ENCODE measurements at regions of chr15 and their contacts with region 1.

Region 1: DNA sequence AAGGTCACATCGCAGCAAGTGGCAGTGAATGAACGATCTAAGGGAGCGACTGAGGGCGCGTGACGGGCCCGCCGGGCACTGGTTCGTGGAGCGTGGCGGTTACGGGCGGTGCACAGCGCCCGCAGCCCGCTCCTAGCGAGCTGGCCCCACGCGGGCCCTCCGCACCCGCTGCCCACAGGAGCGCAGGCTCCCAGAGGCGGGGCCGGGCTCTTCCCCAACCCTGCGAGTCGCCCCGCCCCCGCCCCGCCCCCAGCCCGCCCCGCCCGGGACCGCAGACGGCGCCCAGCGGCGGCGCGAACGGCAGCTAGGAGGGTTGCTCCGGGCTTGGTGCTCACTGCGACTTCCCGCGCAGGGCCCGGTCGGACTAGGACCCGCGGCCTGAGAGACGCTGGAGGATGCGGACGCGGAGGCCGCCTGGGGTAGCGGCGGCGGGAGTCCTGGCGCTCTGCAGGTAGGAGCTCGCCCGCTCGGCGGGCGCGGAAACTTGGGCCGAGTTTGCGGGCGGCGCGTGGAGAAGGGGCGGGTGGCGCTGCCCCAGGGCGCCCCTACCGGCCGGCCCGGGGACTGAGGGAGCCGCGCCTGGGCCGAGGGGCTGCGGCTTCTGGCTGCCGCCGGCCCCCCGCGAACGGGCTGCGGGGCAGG is at the start of gene C15orf39:
- DNase-seq: no peak
- H3K4me3 ChIP-seq: peak within 1 kb of the TSS; percentile 89
- H3K27ac ChIP-seq: peak within 1 kb of the TSS; percentile 85
- H3K27me3 ChIP-seq: peaks cover 19% of the 10 kb centered on the region
- CTCF ChIP-seq: peak; percentile 57
- polyA plus RNA-seq, gene C15orf39: 2.1 and 3.3 TPM in 2 replicates

Region 2: DNA sequence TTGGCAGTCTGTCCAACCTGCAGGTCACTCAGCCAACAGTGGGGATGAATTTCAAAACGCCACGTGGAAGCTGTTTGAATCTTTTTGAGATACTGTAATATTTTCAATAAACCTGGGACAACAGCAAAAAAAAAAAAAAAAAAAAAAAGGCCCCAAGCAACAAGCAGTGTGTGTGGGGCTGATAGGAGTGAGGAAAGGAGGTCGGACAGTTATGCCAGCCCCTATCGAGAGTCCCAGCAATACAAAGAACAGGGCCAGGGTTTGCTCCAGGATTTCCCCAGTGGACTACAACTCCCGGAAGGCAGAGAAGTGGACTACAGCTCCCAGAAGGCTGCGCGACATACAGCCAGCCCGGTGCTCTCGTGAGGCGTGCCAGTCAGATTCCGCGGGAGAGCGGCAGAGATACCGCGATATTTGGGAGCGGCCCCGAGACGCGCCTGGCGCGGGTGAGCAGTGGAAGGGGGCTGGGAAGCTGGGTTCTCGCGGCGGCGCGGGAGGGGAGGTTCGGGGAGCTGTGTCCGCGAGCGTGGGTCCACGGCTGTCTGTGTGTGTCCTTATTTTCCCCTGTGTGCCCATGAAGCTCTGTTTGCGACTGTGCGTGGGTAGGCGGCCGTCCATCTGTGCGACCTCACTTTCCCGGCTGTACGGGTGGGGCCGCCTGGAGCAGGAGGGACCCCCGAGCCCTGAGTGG is 178.4 kb before region 1 on chr15 and contains the start of gene PPCDC:
- CTCF ChIA-PET with region 1: interaction called, 63 read pairs
- POLR2A ChIA-PET with region 1: interaction called, 12 read pairs
- DNase-seq: peak; percentile 86
- H3K4me3 ChIP-seq: peak within 1 kb of the TSS; percentile 93
- H3K27ac ChIP-seq: peak within 1 kb of the TSS; percentile 31
- H3K27me3 ChIP-seq: peaks cover 2% of the 10 kb centered on the region
- CTCF ChIP-seq: no peak
- polyA plus RNA-seq, gene PPCDC: 5.5 and 7.1 TPM in 2 replicates

Region 3: GRCh38 chr15:75029378-75030022 is 172.2 kb before region 1 on chr15:
- CTCF ChIA-PET with region 1: interaction called, 63 read pairs
- POLR2A ChIA-PET with region 1: interaction called, 6 read pairs
- DNase-seq: peak; percentile 63
- H3K4me3 ChIP-seq: peak overlapping the region; percentile 41
- H3K27ac ChIP-seq: peak overlapping the region; percentile 52
- H3K27me3 ChIP-seq: no peaks in the 10 kb centered on the region
- CTCF ChIP-seq: peak; percentile 89

Region 4: DNA sequence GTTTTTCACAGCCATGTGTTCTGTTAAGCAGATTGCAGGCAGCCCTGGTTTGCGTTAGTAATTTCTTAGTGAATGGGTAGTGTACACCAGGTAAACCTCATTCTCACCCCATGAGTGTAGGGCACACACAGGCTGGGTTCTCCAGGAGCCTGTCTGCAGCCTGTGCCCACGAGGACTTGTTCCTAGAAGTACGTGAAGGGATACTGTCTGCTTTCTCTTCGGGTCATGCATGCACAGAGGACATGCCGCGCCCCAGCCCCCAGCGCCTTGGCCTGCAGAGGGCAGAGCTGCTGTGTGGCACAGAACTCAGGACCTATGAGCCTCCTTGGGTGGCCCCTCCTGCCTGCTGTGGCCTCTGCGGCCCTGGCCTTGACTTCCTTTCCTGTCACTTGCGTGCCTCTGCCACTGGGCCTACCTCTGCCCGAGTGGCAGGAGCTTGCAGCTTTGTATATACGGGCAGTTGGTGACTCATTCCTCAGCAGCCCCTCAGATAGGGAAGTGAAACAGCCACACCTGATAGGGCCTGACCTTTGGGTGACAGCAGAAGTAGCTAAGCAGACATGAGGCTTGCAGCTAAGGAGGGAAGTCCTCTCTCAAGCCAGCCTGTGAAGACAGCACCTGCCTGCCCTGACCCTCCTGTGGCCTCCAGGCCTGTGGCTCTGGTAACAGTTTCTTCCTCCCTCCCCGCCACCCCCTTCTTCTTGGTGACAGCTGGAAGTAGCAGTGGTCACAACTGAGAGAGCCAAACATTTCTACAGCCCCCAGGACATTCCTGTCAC is 158.8 kb before region 1 on chr15:
- CTCF ChIA-PET with region 1: interaction called, 35 read pairs
- POLR2A ChIA-PET with region 1: interaction called, 28 read pairs
- DNase-seq: no peak
- H3K4me3 ChIP-seq: no peak overlapping the region
- H3K27ac ChIP-seq: peak overlapping the region; percentile 94
- H3K27me3 ChIP-seq: no peaks in the 10 kb centered on the region
- CTCF ChIP-seq: peak; percentile 35

Region 5: DNA sequence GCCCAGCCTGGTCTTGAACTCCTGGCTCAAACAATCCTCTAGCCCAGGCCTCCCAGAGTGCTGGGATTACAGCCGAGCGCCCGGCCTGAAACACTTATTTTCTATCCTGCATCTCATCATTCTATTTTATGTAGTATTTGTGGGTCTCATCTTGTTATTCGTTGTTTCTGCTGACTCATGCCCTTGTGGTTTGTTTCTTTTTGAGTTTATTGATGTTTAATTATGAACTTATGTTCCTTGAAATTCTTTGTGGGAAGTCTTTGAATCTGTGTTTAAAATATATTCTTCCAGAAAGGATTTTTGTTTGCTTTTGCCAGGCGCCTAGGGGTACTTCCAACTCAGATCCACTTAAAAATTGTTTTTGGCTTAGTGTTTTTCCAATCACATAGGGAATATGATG is 78.3 kb before region 1 on chr15:
- CTCF ChIA-PET with region 1: interaction called, 13 read pairs
- POLR2A ChIA-PET with region 1: interaction called, 3 read pairs
- DNase-seq: peak; percentile 37
- H3K4me3 ChIP-seq: no peak overlapping the region
- H3K27ac ChIP-seq: peak overlapping the region; percentile 52
- H3K27me3 ChIP-seq: peaks cover 4% of the 10 kb centered on the region
- CTCF ChIP-seq: no peak

Region 6: GRCh38 chr15:75176404-75176761 is 25.3 kb before region 1 on chr15:
- CTCF ChIA-PET with region 1: interaction called, 5 read pairs
- POLR2A ChIA-PET with region 1: interaction called, 10 read pairs
- DNase-seq: no peak
- H3K4me3 ChIP-seq: no peak overlapping the region
- H3K27ac ChIP-seq: no peak overlapping the region
- H3K27me3 ChIP-seq: no peaks in the 10 kb centered on the region
- CTCF ChIP-seq: no peak

Region 7: DNA sequence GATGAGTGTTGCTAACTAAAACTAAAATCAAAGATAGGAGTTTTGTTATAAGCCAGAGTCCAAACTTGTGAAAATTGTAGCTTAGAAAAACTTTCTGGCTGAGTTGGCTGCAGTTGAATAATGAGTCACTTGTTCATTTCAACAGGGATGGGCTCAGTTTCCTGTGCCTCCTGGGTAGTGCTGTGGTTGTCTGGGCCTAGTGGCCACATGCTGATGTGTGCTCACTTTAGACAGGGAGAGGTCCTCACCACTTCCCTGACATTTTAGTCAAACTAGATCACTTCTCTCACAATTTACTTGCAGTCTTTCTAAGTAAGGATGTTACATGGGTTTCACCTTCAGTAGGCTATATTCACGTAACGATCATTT is 635.2 kb after region 1 on chr15:
- CTCF ChIA-PET with region 1: interaction called, 10 read pairs
- POLR2A ChIA-PET with region 1: no interaction called
- DNase-seq: no peak
- H3K4me3 ChIP-seq: no peak overlapping the region
- H3K27ac ChIP-seq: no peak overlapping the region
- H3K27me3 ChIP-seq: no peaks in the 10 kb centered on the region
- CTCF ChIP-seq: no peak